ENCODE measurements at regions of chr5 and their contacts with region 1.

Region 1: GRCh38 chr5:73215891-73216610 is 43.1 kb downstream of the TMEM174 start:
- DNase-seq: peak in 34 of 35 experiments; percentile 25 to 77 (median 50)
- ATAC-seq: peak; percentile 91 to 96 (median 92)
- H3K4me3 ChIP-seq: peak overlapping the region; percentile 33 to 34
- H3K4me3 Mint-ChIP-seq: peak overlapping the region; percentile 24 to 53 (median 47)
- H3K27ac ChIP-seq: no peak overlapping the region
- H3K27ac Mint-ChIP-seq: no peak overlapping the region
- H3K4me1 ChIP-seq: peaks cover 0 to 13% of the 10 kb centered on the region in 2 experiments
- H3K4me1 Mint-ChIP-seq: peaks cover 6 to 12% (median 11%) of the 10 kb centered on the region in 3 donors
- H3K27me3 ChIP-seq: peaks cover 14 to 43% of the 10 kb centered on the region in 2 experiments
- H3K27me3 Mint-ChIP-seq: peaks cover 71 to 77% of the 10 kb centered on the region in 2 donors

Region 2: DNA sequence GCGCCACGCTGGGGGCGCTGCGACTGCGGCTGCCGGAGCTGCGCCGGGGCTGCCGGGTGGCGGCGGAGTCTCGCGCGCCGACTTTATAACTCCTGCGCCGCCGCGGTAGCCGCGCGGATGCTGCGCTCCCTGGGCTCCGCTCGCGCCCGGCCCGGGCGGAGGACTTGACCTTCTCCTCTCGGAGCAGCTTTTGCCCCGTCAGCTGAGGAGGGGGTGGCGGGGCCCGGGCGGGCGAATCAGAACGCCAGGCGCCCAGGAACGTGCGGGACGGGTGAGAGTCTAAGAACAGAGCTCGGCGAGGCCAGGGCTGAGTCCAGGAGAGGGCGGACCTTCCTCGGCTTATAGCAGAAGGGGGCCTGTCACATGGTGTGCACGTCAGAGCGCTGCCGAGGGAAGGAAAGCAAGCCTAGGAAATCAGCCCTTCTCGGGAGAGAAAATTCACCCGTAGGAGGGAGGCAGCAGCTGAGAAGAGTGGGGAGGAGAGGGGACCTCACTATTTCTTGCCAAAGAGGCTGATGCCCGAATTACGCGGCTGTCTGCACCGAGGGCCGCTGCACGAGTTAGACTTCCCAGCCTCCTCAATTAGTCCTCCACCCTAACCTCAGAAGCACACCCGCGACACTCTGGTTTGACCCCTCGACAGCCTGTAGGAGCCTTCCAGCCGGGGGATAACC is 232.5 kb after region 1 on chr5 and contains the start of gene FOXD1:
- CTCF ChIA-PET with region 1: interaction called, 4 to 27 read pairs
- POLR2A ChIA-PET with region 1: no interaction called
- DNase-seq: peak in 7 of 35 experiments; percentile 17 to 52 (median 27)
- ATAC-seq: peak; percentile 26 to 42 (median 36)
- H3K4me3 ChIP-seq: peak within 1 kb of the TSS; percentile 57 to 67
- H3K4me3 Mint-ChIP-seq: peak within 1 kb of the TSS; percentile 78 to 84 (median 78)
- H3K27ac ChIP-seq: no peak within 1 kb of the TSS
- H3K27ac Mint-ChIP-seq: peak within 1 kb of the TSS; percentile 11 to 52
- H3K4me1 ChIP-seq: peaks cover 2 to 39% of the 10 kb centered on the region in 2 experiments
- H3K4me1 Mint-ChIP-seq: peaks cover 15 to 29% (median 18%) of the 10 kb centered on the region in 3 donors
- H3K27me3 ChIP-seq: peaks cover 40 to 63% of the 10 kb centered on the region in 2 experiments
- H3K27me3 Mint-ChIP-seq: peaks cover 57 to 80% of the 10 kb centered on the region in 2 donors
- total RNA-seq, gene FOXD1: 0.20 to 0.68 (median 0.39) TPM in 3 of 5 donors, not detected in the others

Measured in T-cell (primary cell).